GM12878 (cell line): ENCODE measurements at regions of chr11 and their contacts with region 1.

Region 1: DNA sequence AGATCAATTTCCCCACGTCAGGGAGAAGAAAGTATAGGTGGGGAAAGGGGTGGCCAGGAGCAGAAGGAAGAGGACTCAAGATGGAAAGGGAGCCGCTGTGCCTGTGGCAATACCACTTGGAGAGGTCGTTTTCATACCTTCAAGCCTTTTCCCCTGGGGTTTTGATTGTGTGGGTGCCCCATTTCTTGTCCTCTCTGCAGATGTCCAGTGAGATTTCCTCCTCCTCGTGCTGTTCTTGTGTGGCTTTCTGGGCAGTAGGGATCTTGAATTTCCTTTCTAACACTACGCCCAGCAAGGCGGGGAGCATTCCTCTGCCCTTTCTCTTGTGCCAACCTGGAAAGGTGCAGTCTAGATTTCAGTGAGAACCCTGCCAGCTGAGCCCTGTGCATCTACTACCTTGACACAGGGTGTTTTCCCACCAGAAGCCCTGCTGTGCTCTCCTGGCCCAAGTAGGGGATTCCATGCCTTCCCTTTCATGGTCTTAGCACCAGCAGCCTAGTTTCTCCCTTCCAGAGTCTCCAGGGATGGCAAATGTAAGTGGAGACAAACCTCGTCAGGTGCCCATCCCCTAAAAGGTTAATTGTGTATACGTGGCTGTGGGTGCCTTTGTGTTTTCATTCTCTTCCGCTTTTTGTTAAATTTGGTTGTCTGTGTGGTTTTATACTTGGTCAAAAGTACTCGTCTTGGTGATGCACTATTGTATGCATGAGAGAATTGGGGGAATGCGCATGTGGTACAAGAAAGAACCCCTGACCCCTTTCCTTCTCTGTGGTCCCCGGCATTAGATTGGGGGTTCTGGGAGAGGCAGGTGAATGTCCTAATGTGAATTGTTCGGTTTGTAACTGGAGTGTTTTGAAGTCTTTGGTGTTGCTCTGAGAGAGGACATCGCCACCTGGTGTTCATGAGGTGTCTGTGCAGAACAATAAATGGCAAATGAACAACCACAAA is 71.4 kb upstream of the MPEG1 start:
- DNase-seq: peak; percentile 71
- ATAC-seq: peak; percentile 86
- H3K4me3 ChIP-seq: peak overlapping the region; percentile 37
- H3K27ac ChIP-seq: peak overlapping the region; percentile 63
- H3K4me1 ChIP-seq: peaks cover 18% of the 10 kb centered on the region
- H3K27me3 ChIP-seq: no peaks in the 10 kb centered on the region
- CTCF ChIP-seq: peak; percentile 81 to 83 (median 82)
- EP300 ChIP-seq: 0 out of 4 replicates have a peak, but pooled peaks of 1 of the 2 experiments have one; percentile 26
- POLR2A ChIP-seq: no peak
- RAD21 ChIP-seq: peak; percentile 84

Region 2: DNA sequence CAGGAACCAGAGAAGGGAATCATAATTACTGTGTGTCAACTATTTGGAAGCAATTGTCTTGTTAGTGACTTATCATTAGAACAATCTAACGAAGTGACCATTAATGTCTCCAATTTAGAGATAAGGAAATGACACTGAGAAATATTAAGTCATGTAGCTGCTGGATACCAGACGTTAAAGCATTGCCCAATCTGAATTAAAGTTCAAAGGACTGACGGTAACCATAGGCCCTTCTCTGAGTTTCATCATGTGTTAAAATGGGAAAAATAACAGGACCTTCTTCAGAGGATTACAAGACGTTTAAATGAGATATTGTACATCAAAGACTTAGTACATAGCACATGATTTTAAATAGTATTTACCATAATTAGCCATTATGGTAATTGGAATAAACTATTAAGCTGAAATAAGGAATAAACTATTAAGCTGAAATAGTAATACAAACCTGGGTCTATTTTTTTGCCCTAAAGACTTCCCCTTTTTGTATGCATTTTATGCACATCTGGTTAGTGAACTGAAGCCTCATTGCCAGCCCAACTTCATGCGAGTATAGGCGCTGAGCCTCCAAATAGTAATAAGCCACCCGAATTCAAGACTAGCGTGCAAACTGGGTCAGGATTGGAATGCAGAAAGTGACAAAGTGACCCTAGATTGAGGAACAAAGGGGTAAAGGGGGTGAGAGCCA is 303.8 kb before region 1 on chr11:
- CTCF ChIA-PET with region 1: no interaction called
- POLR2A ChIA-PET with region 1: no interaction called
- RAD21 ChIA-PET with region 1: no interaction called
- SMC1A ChIA-PET with region 1: no interaction called
- in situ Hi-C with region 1: no loop called
- intact Hi-C with region 1: no loop called
- DNase-seq: no peak
- ATAC-seq: no peak
- H3K4me3 ChIP-seq: no peak overlapping the region
- H3K27ac ChIP-seq: no peak overlapping the region
- H3K4me1 ChIP-seq: no peaks in the 10 kb centered on the region
- H3K27me3 ChIP-seq: no peaks in the 10 kb centered on the region
- CTCF ChIP-seq: no peak
- EP300 ChIP-seq: no peak
- POLR2A ChIP-seq: no peak
- RAD21 ChIP-seq: no peak

Region 3: DNA sequence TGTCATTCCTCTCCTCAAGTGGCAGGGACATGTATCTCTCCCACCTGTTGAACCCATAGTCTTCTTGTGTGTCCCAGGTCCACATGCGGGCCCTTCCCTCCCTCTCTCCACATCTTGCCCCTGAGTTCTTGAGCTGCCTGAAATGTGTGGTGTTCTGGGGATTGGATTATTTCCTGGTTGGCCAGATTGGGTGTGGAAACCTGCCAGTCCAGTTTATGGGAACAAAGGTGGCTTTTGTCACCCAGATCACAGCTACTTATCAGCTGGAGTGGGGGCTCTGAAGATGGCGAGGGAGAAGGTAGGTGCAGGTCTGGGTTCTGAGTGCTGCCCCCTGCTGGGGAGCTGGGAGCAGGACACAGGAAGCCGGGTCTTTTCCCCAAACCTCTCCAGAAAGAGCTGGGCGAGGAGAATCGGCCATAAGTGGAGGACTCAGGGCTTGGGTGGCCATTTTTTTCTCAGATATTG is 97.9 kb before region 1 on chr11:
- CTCF ChIA-PET with region 1: interaction called, 11 read pairs
- POLR2A ChIA-PET with region 1: no interaction called
- RAD21 ChIA-PET with region 1: interaction called, 3 read pairs
- SMC1A ChIA-PET with region 1: interaction called, 3 read pairs
- in situ Hi-C with region 1: no loop called
- intact Hi-C with region 1: no loop called
- DNase-seq: no peak
- ATAC-seq: peak; percentile 88
- H3K4me3 ChIP-seq: no peak overlapping the region
- H3K27ac ChIP-seq: no peak overlapping the region
- H3K4me1 ChIP-seq: peaks cover 10% of the 10 kb centered on the region
- H3K27me3 ChIP-seq: no peaks in the 10 kb centered on the region
- CTCF ChIP-seq: peak; percentile 67 to 92 (median 89)
- EP300 ChIP-seq: no peak
- POLR2A ChIP-seq: no peak
- RAD21 ChIP-seq: peak; percentile 46

Region 4: DNA sequence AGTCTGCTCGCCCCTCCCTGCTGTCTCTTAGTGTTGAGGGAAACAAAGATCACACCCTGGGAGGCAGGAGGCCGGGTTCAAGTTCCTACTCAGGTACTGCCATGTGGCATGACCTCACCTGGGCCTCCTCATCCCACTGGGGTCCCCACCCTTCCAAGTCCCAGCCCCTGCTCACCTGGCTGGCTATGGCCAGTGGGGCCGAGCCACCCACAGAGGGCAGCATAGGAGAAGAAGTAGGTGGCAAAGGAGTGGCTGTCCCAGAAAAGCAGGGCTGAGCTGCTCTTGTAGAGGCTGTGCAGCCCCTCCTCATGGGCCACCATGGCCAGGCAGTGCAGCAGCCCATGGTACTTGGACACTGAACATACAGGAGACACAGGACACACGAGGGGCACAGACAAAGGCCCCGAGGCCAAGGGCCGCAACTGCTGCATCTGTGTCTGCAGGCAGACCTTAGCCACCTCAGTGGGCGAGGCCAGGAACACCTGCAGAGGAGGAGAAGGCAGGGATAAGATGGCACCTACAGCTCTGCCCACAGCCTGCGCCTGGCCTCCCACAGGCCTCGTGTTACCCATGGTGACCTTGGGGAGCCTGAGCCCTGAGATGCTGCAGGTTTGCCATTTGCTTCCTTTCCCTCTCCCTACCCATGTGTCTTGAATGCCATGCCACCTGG is 20.7 kb before region 1 on chr11:
- CTCF ChIA-PET with region 1: interaction called, 13 read pairs
- POLR2A ChIA-PET with region 1: interaction called, 6 read pairs
- RAD21 ChIA-PET with region 1: interaction called, 8 read pairs
- SMC1A ChIA-PET with region 1: interaction called, 10 read pairs
- in situ Hi-C with region 1: no loop called
- intact Hi-C with region 1: loop called (anchors 1 kb)
- DNase-seq: no peak
- ATAC-seq: peak; percentile 53
- H3K4me3 ChIP-seq: no peak overlapping the region
- H3K27ac ChIP-seq: no peak overlapping the region
- H3K4me1 ChIP-seq: peaks cover 30% of the 10 kb centered on the region
- H3K27me3 ChIP-seq: no peaks in the 10 kb centered on the region
- CTCF ChIP-seq: peak; percentile 56 to 71 (median 58)
- EP300 ChIP-seq: no peak
- POLR2A ChIP-seq: no peak
- RAD21 ChIP-seq: peak; percentile 82

Region 5: GRCh38 chr11:59401262-59401552 is 117.1 kb after region 1 on chr11:
- CTCF ChIA-PET with region 1: no interaction called
- POLR2A ChIA-PET with region 1: no interaction called
- RAD21 ChIA-PET with region 1: no interaction called
- SMC1A ChIA-PET with region 1: no interaction called
- in situ Hi-C with region 1: no loop called
- intact Hi-C with region 1: no loop called
- DNase-seq: no peak
- ATAC-seq: no peak
- H3K4me3 ChIP-seq: no peak overlapping the region
- H3K27ac ChIP-seq: no peak overlapping the region
- H3K4me1 ChIP-seq: no peaks in the 10 kb centered on the region
- H3K27me3 ChIP-seq: no peaks in the 10 kb centered on the region
- CTCF ChIP-seq: no peak
- EP300 ChIP-seq: no peak
- POLR2A ChIP-seq: no peak
- RAD21 ChIP-seq: no peak

Region 6: DNA sequence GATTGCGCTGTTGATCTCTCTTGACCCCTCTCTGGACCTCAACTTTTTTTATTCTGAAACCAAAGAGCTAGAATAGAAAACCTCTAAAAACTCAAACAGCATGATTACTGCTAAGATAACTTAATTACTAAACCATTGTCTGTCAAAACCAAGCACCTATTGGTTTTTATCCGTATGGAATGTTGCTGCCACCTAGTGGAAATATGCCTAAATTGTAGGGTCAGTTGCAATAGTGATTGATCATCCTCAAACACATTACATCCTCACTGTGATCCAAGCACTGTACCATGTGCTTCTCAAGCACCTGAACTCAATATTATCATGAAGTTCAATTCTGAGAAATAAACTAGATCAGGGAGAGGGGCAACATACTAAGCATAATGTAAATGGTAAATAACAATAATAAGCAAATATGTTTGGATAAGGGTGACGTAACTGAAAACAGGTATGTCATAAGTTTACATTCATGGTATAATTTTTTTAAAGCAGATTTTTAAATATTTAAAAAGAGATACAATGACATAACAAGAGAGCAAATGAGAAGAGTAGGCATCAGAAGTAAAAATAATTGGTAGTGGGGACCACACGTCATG is 145.9 kb after region 1 on chr11:
- CTCF ChIA-PET with region 1: interaction called, 8 read pairs
- POLR2A ChIA-PET with region 1: no interaction called
- RAD21 ChIA-PET with region 1: no interaction called
- SMC1A ChIA-PET with region 1: interaction called, 5 read pairs
- in situ Hi-C with region 1: no loop called
- intact Hi-C with region 1: loop called (anchors 1 kb)
- DNase-seq: peak; percentile 61
- ATAC-seq: peak; percentile 94
- H3K4me3 ChIP-seq: no peak overlapping the region
- H3K27ac ChIP-seq: no peak overlapping the region
- H3K4me1 ChIP-seq: no peaks in the 10 kb centered on the region
- H3K27me3 ChIP-seq: peaks cover 0 to 4% of the 10 kb centered on the region in 2 experiments; a peak in 1 of 4 replicates
- CTCF ChIP-seq: peak; percentile 70 to 82 (median 78)
- EP300 ChIP-seq: no peak
- POLR2A ChIP-seq: no peak
- RAD21 ChIP-seq: peak; percentile 92

Region 7: DNA sequence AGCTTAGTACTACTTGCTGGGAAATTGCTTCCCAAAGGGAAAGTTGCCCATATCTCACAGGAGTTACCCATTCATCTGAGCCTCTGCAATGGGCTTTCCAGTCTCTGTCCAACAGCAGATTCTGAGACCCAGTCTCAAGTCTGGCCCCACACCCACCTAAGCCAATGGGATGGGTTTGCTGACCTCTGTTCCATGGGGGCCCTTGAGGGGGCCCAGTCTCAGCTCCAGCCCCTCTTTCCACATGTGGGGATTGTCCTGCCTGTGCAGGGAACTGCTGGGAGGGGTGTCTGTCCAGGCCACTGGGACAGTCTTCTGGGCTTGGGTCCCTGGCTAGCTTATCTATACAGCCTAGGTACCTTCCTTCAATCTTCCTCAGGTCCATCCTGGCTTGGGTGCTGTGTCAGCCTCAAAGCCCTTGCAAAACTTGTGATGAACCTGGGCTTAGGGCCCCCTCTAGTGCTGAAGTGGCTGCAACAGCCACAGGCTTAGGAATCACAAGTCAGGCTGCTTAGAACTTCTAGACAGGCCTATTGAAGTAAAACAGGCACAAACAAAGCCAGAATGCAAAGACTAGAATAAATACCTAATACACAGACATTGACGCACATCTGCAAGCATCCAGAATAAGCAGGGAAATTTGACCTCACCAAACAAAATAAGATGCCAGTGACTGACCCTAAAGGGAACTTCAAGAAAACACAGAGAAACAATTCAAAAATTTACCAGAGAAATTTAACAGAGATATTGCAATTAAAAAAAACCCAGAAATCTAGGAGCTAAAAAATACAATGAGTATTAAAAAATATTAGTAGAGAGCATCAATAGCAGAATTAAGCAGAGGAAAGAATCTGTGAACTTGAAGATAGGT is 396.4 kb after region 1 on chr11:
- CTCF ChIA-PET with region 1: no interaction called
- POLR2A ChIA-PET with region 1: no interaction called
- RAD21 ChIA-PET with region 1: no interaction called
- SMC1A ChIA-PET with region 1: no interaction called
- in situ Hi-C with region 1: loop called (anchors 25 kb)
- intact Hi-C with region 1: no loop called
- DNase-seq: peak; percentile 20
- ATAC-seq: peak; percentile 99
- H3K4me3 ChIP-seq: no peak overlapping the region
- H3K27ac ChIP-seq: no peak overlapping the region
- H3K4me1 ChIP-seq: no peaks in the 10 kb centered on the region
- H3K27me3 ChIP-seq: no peaks in the 10 kb centered on the region
- CTCF ChIP-seq: peak; percentile 76 to 92 (median 80)
- EP300 ChIP-seq: no peak
- POLR2A ChIP-seq: no peak
- RAD21 ChIP-seq: peak; percentile 78